ENCODE measurements at regions of chr1 and their contacts with region 1.

Region 1: GRCh38 chr1:155859234-155859829 is at the start of gene SYT11:
- DNase-seq: peak; percentile 79 to 97 (median 93)
- ATAC-seq: peak; percentile 85
- H3K4me3 ChIP-seq: peak within 1 kb of the TSS; percentile 61 to 64
- H3K4me3 Mint-ChIP-seq: peak within 1 kb of the TSS; percentile 83
- H3K27ac ChIP-seq: peak within 1 kb of the TSS; percentile 45 to 96
- H3K27ac Mint-ChIP-seq: peak within 1 kb of the TSS; percentile 90
- H3K4me1 ChIP-seq: peaks cover 37% of the 10 kb centered on the region
- H3K4me1 Mint-ChIP-seq: peaks cover 44% of the 10 kb centered on the region
- H3K27me3 ChIP-seq: no peaks in the 10 kb centered on the region
- H3K27me3 Mint-ChIP-seq: peaks cover 5% of the 10 kb centered on the region
- CTCF ChIP-seq: no peak
- total RNA-seq, gene SYT11: 6.9 to 8.6 TPM

Region 2: DNA sequence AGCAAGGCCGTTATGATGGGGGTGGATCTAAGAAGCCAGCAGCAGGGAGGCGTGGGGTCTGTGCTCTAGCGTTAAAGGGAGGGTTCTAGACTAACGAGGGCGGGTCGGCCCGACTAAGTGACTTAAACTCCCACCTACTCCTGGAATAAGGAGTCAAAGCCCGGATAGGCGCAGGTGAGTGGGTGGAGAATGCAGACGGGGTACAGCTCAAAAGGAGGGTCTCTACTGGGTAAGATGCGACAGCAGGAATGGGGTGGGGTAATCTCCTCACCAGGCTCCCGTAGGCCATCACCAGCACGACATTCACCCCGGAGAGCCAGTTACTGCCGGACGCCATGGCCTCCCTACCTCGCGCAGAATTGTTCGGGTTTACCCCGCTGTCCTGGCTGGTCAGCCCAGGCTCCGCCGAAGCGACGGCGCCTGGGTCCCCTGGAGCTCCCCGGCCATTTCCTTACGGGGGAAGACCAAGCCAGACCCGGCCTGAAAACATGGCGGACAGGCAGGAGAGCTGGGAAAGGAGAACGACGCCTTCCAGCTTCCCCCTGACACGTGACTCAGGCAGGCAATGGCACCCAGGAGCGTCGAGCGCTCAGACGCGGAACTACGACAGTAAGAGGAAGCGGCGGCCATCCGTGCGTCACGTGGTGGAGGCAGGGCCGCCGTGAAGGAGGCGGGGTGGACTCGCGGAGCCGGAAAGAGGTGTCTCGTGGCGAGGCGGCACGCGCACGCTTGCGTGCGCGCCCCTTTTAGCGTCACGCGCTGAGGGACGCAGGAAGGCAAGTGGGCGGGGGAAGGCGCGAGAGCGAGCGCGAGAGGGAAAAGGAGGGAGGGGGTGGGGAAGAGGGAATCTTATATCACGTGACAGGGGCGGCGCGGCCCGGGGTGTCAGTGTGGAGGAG is 1639.0 kb before region 1 on chr1 and contains the start of gene UBAP2L:
- CTCF ChIA-PET with region 1: no interaction called
- POLR2A ChIA-PET with region 1: no interaction called
- intact Hi-C with region 1: loop called (anchors 5 kb)
- DNase-seq: peak; percentile 97 to 100 (median 99)
- ATAC-seq: peak; percentile 82
- H3K4me3 ChIP-seq: peak within 1 kb of the TSS; percentile 68 to 93
- H3K4me3 Mint-ChIP-seq: peak within 1 kb of the TSS; percentile 95
- H3K27ac ChIP-seq: peak within 1 kb of the TSS; percentile 93 to 99
- H3K27ac Mint-ChIP-seq: peak within 1 kb of the TSS; percentile 99
- H3K4me1 ChIP-seq: peaks cover 54% of the 10 kb centered on the region
- H3K4me1 Mint-ChIP-seq: peaks cover 71% of the 10 kb centered on the region
- H3K27me3 ChIP-seq: no peaks in the 10 kb centered on the region
- H3K27me3 Mint-ChIP-seq: no peaks in the 10 kb centered on the region
- CTCF ChIP-seq: no peak
- total RNA-seq, gene UBAP2L: 212 to 226 TPM

Region 3: DNA sequence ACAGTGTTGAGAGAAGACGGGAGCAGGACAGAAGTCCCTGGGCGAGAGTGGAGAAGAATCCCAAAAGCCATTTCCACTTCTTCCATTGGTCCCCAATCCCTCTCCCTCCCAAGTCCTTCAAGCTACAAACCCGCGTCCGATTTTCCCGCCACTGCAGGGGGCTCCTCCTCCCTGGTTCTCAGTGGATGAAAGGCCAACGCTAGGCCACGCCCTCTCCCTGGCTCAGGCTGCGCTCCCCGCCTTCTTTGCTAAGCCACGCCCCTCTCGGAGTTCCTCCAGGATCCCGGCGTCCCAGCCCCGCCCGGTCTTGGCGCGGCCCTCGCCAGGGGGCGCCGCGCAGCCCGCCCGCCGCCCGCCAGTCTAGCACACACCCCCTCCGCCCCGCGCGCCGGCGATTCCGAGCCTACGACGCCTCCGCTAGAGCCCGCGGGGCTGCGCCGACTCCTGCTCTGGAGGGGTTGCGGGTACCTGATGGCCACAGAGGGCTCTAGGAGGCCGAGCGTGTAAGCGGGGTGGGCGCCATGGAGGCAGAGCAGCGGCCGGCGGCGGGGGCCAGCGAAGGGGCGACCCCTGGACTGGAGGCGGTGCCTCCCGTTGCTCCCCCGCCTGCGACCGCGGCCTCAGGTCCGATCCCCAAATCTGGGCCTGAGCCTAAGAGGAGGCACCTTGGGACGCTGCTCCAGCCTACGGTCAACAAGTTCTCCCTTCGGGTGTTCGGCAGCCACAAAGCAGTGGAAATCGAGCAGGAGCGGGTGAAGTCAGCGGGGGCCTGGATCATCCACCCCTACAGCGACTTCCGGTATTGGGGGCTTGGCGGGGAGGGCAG is 582.0 kb before region 1 on chr1 and contains the start of gene HCN3:
- CTCF ChIA-PET with region 1: no interaction called
- POLR2A ChIA-PET with region 1: no interaction called
- intact Hi-C with region 1: loop called in 1 of 2 experiments (anchors 5 kb)
- DNase-seq: peak; percentile 65 to 96 (median 92)
- ATAC-seq: peak; percentile 47
- H3K4me3 ChIP-seq: peak within 1 kb of the TSS; percentile 57 to 70
- H3K4me3 Mint-ChIP-seq: peak within 1 kb of the TSS; percentile 79
- H3K27ac ChIP-seq: peak within 1 kb of the TSS; percentile 20 to 31
- H3K27ac Mint-ChIP-seq: peak within 1 kb of the TSS; percentile 32
- H3K4me1 ChIP-seq: peaks cover 29% of the 10 kb centered on the region
- H3K4me1 Mint-ChIP-seq: peaks cover 35% of the 10 kb centered on the region
- H3K27me3 ChIP-seq: no peaks in the 10 kb centered on the region
- H3K27me3 Mint-ChIP-seq: no peaks in the 10 kb centered on the region
- CTCF ChIP-seq: peak; percentile 64
- total RNA-seq, gene HCN3: 1.3 TPM

Region 4: GRCh38 chr1:155893389-155894142 is 34.2 kb after region 1 on chr1:
- CTCF ChIA-PET with region 1: interaction called, 3 read pairs
- POLR2A ChIA-PET with region 1: no interaction called
- intact Hi-C with region 1: loop called in 1 of 2 experiments (anchors 2 kb)
- DNase-seq: peak in 5 of 9 experiments; percentile 16 to 69 (median 35)
- ATAC-seq: peak; percentile 95
- H3K4me3 ChIP-seq: no peak overlapping the region
- H3K4me3 Mint-ChIP-seq: no peak overlapping the region
- H3K27ac ChIP-seq: peak overlapping the region in 1 of 2 experiments; percentile 51
- H3K27ac Mint-ChIP-seq: peak overlapping the region; percentile 86
- H3K4me1 ChIP-seq: peaks cover 13% of the 10 kb centered on the region
- H3K4me1 Mint-ChIP-seq: peaks cover 15% of the 10 kb centered on the region
- H3K27me3 ChIP-seq: no peaks in the 10 kb centered on the region
- H3K27me3 Mint-ChIP-seq: no peaks in the 10 kb centered on the region
- CTCF ChIP-seq: no peak

Region 5: DNA sequence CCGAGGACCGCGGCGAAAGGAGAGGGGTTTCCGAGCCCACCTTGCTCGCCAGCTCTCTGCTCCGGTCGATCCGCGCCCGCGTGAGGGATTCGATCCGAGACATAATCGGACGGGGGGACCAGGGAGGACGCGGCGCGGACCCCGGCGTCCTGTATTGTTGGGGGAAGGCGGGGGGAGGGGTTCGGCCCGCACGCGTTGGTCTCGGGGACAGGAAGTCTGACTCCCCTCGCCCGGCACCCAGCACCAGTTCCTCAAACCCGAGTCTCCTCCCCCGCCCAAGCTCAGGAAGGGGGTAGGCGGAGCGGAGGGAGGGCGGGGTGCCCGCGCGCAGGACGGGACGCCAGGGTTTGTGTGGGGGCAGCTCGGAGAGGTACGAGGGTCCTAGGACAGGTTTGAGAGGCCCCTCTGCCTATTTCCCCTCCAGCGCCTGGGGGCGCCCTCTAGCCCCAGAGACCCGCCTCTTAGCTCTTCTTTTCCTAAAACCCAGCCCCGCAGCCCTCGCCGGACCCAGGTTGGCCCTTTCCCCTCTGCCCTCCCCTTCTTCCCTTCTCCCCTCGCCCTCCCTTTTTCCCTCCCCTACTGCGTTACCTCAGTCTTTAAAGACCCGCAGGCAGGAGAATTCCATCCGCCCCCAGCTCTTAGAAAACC is 119.1 kb after region 1 on chr1 and contains the start of gene ARHGEF2:
- CTCF ChIA-PET with region 1: no interaction called
- POLR2A ChIA-PET with region 1: no interaction called
- intact Hi-C with region 1: loop called (anchors 2 to 5 kb)
- DNase-seq: peak; percentile 46 to 88 (median 79)
- ATAC-seq: peak; percentile 66
- H3K4me3 ChIP-seq: peak within 1 kb of the TSS; percentile 70 to 100
- H3K4me3 Mint-ChIP-seq: peak within 1 kb of the TSS; percentile 97
- H3K27ac ChIP-seq: peak within 1 kb of the TSS; percentile 59 to 91
- H3K27ac Mint-ChIP-seq: peak within 1 kb of the TSS; percentile 94
- H3K4me1 ChIP-seq: peaks cover 72% of the 10 kb centered on the region
- H3K4me1 Mint-ChIP-seq: peaks cover 69% of the 10 kb centered on the region
- H3K27me3 ChIP-seq: no peaks in the 10 kb centered on the region
- H3K27me3 Mint-ChIP-seq: no peaks in the 10 kb centered on the region
- CTCF ChIP-seq: no peak
- total RNA-seq, gene ARHGEF2: 51.6 to 52.3 TPM

Region 6: GRCh38 chr1:156193488-156194299 is 334.4 kb after region 1 on chr1 and contains the start of gene SLC25A44:
- CTCF ChIA-PET with region 1: no interaction called
- POLR2A ChIA-PET with region 1: no interaction called
- intact Hi-C with region 1: loop called in 1 of 2 experiments (anchors 5 kb)
- DNase-seq: peak; percentile 89 to 99 (median 97)
- ATAC-seq: peak; percentile 99
- H3K4me3 ChIP-seq: peak within 1 kb of the TSS; percentile 78 to 88
- H3K4me3 Mint-ChIP-seq: peak within 1 kb of the TSS; percentile 100
- H3K27ac ChIP-seq: peak within 1 kb of the TSS; percentile 67 to 85
- H3K27ac Mint-ChIP-seq: peak within 1 kb of the TSS; percentile 95
- H3K4me1 ChIP-seq: peaks cover 13% of the 10 kb centered on the region
- H3K4me1 Mint-ChIP-seq: peaks cover 47% of the 10 kb centered on the region
- H3K27me3 ChIP-seq: no peaks in the 10 kb centered on the region
- H3K27me3 Mint-ChIP-seq: no peaks in the 10 kb centered on the region
- CTCF ChIP-seq: peak; percentile 13
- total RNA-seq, gene SLC25A44: 12.1 to 12.6 TPM

Region 7: GRCh38 chr1:156298852-156299357 is 439.6 kb after region 1 on chr1 and contains the start of gene VHLL:
- CTCF ChIA-PET with region 1: no interaction called
- POLR2A ChIA-PET with region 1: no interaction called
- intact Hi-C with region 1: no loop called
- DNase-seq: no peak
- ATAC-seq: no peak
- H3K4me3 ChIP-seq: no peak within 1 kb of the TSS
- H3K4me3 Mint-ChIP-seq: no peak within 1 kb of the TSS
- H3K27ac ChIP-seq: no peak within 1 kb of the TSS
- H3K27ac Mint-ChIP-seq: no peak within 1 kb of the TSS
- H3K4me1 ChIP-seq: peaks cover 17% of the 10 kb centered on the region
- H3K4me1 Mint-ChIP-seq: peaks cover 18% of the 10 kb centered on the region
- H3K27me3 ChIP-seq: no peaks in the 10 kb centered on the region
- H3K27me3 Mint-ChIP-seq: no peaks in the 10 kb centered on the region
- CTCF ChIP-seq: no peak
- total RNA-seq, gene VHLL: not detected